Activated CD8-positive, alpha-beta T cell treated with anti-CD3 and anti-CD28 coated beads, Interleukin-2, amount 10 ng/mL, durations not matched to agents 7 days and 5 days (primary cell): ENCODE measurements at regions of chr5 and their contacts with region 1.

Region 1: GRCh38 chr5:142800776-142801494 is 30.8 kb downstream of the ARHGAP26 start:
- DNase-seq: peak; percentile 74
- ATAC-seq: peak; percentile 84
- H3K4me3 Mint-ChIP-seq: peak overlapping the region; percentile 68
- H3K27ac Mint-ChIP-seq: peak overlapping the region; percentile 93
- H3K4me1 Mint-ChIP-seq: peaks cover 67% of the 10 kb centered on the region
- H3K27me3 Mint-ChIP-seq: no peaks in the 10 kb centered on the region

Region 2: GRCh38 chr5:142280066-142280911 is 520.6 kb before region 1 on chr5:
- CTCF ChIA-PET with region 1: no interaction called
- POLR2A ChIA-PET with region 1: no interaction called
- DNase-seq: no peak
- ATAC-seq: no peak
- H3K4me3 Mint-ChIP-seq: no peak overlapping the region
- H3K27ac Mint-ChIP-seq: no peak overlapping the region
- H3K4me1 Mint-ChIP-seq: no peaks in the 10 kb centered on the region
- H3K27me3 Mint-ChIP-seq: no peaks in the 10 kb centered on the region

Region 3: GRCh38 chr5:142769741-142770631 is 30.9 kb before region 1 on chr5 and contains the start of gene ARHGAP26:
- CTCF ChIA-PET with region 1: interaction called, 69 read pairs
- POLR2A ChIA-PET with region 1: interaction called, 21 read pairs
- DNase-seq: peak; percentile 96
- ATAC-seq: peak; percentile 96
- H3K4me3 Mint-ChIP-seq: peak within 1 kb of the TSS; percentile 96
- H3K27ac Mint-ChIP-seq: peak within 1 kb of the TSS; percentile 82
- H3K4me1 Mint-ChIP-seq: peaks cover 35% of the 10 kb centered on the region
- H3K27me3 Mint-ChIP-seq: peaks cover 3% of the 10 kb centered on the region
- total RNA-seq, gene ARHGAP26: 25.4 to 30.3 TPM

Region 4: DNA sequence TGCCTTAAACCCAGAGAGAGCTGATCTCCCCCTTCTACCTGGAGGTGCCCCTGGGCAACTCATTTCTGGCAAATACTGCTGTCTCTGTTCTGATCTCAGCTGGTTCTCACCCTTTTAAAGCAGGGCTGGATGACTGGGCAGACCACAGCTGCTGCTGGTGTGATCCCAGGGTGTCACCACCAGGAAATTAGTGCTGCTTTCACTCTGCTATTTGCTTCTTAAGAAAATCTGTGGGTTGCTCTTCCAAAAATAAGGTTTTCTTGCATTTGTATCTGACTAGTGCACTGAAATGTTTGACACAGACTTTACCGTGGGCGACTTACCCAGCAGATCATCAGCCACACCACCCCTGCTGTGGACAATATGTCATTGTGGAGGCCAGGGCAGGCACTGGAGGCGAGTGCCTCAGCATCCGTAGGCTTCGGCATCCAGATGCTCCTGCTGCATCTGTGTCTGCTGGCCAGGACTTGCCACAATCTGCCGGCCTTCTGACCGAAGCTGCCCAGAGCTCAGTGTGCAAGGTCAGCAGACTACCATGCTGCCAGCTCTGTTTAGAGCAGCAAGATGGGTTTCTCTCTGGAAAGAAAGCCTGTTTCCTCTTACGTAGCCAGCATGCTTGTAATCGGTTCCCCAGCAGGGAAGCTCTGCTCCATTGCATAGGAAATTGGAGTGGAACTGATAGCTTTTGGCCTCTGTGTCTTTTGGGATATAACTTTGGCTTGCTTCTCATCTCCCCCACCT is 17.2 kb before region 1 on chr5:
- CTCF ChIA-PET with region 1: interaction called, 81 read pairs
- POLR2A ChIA-PET with region 1: interaction called, 8 read pairs
- DNase-seq: peak; percentile 67
- ATAC-seq: peak; percentile 81
- H3K4me3 Mint-ChIP-seq: peak overlapping the region; percentile 21
- H3K27ac Mint-ChIP-seq: peak overlapping the region; percentile 56
- H3K4me1 Mint-ChIP-seq: peaks cover 64% of the 10 kb centered on the region
- H3K27me3 Mint-ChIP-seq: no peaks in the 10 kb centered on the region

Region 5: DNA sequence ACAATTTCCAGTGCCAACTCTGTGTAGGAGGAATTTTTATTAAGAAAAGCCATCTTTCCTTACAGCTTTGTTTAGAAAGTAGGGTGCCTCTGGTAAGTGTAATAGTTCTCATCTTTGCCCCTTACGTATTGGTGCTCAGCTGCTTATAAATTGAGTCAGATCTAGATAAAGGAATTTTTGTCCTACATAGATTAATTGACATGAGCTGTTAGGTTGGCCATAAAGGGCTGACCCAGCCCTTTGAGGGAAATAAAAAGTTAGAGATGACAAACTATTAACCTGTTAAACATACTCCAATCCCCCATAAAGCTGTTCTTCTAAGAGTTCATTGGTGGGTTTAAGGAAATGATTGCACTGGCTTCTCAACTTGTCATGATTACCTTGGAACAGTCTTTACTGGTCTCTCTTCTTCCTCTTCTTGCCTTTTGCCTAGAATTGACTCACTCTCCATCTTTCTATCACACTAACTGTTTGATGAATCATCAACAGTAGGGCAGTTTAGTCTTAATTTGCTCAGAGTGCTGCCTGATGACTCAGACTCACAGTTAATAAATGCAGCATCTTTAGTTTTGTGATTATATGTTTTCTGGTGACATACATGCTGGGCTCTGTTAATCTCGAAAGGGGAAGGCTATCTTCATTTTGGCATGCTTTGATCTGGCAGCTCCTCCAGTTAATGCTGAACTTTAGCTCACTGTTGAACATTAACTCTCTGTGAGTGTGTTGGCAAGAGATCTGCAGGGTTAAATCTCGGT is 21.0 kb after region 1 on chr5:
- CTCF ChIA-PET with region 1: interaction called, 14 read pairs
- POLR2A ChIA-PET with region 1: interaction called, 3 read pairs
- DNase-seq: no peak
- ATAC-seq: peak; percentile 60
- H3K4me3 Mint-ChIP-seq: no peak overlapping the region
- H3K27ac Mint-ChIP-seq: no peak overlapping the region
- H3K4me1 Mint-ChIP-seq: peaks cover 48% of the 10 kb centered on the region
- H3K27me3 Mint-ChIP-seq: no peaks in the 10 kb centered on the region

Region 6: GRCh38 chr5:142845402-142845921 is 44.5 kb after region 1 on chr5:
- CTCF ChIA-PET with region 1: interaction called, 13 read pairs
- POLR2A ChIA-PET with region 1: interaction called, 4 read pairs
- DNase-seq: peak; percentile 48
- ATAC-seq: peak; percentile 81
- H3K4me3 Mint-ChIP-seq: peak overlapping the region; percentile 42
- H3K27ac Mint-ChIP-seq: peak overlapping the region; percentile 90
- H3K4me1 Mint-ChIP-seq: peaks cover 48% of the 10 kb centered on the region
- H3K27me3 Mint-ChIP-seq: no peaks in the 10 kb centered on the region

Region 7: GRCh38 chr5:142915813-142916424 is 115.0 kb after region 1 on chr5:
- CTCF ChIA-PET with region 1: no interaction called
- POLR2A ChIA-PET with region 1: no interaction called
- DNase-seq: peak; percentile 27
- ATAC-seq: no peak
- H3K4me3 Mint-ChIP-seq: no peak overlapping the region
- H3K27ac Mint-ChIP-seq: no peak overlapping the region
- H3K4me1 Mint-ChIP-seq: no peaks in the 10 kb centered on the region
- H3K27me3 Mint-ChIP-seq: no peaks in the 10 kb centered on the region